ENCODE measurements at regions of chr18 and their contacts with region 1.

Region 1: GRCh38 chr18:43571078-43571689 is 293.9 kb upstream of the SYT4 start:
- DNase-seq: peak; percentile 40
- H3K4me3 ChIP-seq: peak overlapping the region in 1 of 2 experiments; percentile 4; a peak in 1 of 4 replicates
- H3K27ac ChIP-seq: no peak overlapping the region
- H3K4me1 ChIP-seq: peaks cover 0 to 6% of the 10 kb centered on the region in 2 experiments; a peak in 2 of 4 replicates
- H3K27me3 ChIP-seq: no peaks in the 10 kb centered on the region
- CTCF ChIP-seq: peak; percentile 88
- EP300 ChIP-seq: no peak
- RAD21 ChIP-seq: peak; percentile 91

Region 2: DNA sequence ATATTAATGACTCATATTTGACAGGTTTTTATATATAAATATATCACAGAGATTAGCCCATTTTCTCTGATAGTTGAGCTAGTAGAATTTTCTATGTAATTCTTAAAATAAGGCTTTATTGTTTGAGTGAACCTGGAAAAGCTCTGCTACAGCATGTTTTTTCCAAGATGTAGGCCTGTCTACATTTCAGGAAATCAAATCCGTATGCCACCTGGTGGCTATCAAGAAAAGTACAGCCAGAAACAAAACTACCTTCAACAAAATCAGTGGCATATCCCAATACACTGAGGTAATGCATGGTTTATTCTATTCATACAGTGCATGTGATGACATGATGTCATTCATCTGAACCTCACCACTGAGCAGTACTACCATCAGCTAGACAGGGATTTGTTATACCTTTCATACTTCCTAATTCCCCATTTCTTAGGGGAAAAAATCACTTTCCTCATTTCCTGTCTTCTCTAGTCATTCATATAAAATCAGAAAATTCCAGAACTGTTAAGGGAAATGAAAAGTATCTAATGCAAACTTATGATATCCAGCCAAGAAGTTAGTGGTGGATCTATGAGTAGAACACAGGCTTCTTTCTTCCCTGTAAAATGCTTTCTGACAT is 16.5 kb after region 1 on chr18:
- CTCF ChIA-PET with region 1: interaction called, 636 read pairs
- POLR2A ChIA-PET with region 1: no interaction called
- DNase-seq: peak; percentile 68
- H3K4me3 ChIP-seq: no peak overlapping the region
- H3K27ac ChIP-seq: no peak overlapping the region
- H3K4me1 ChIP-seq: peaks cover 0 to 3% of the 10 kb centered on the region in 2 experiments; a peak in 2 of 4 replicates
- H3K27me3 ChIP-seq: no peaks in the 10 kb centered on the region
- CTCF ChIP-seq: peak; percentile 75
- EP300 ChIP-seq: no peak
- RAD21 ChIP-seq: peak; percentile 75